ENCODE measurements at regions of chr20 and their contacts with region 1.

Region 1: GRCh38 chr20:53915446-53916172 is 154.8 kb downstream of the BCAS1 start:
- DNase-seq: peak; percentile 98
- H3K4me3 Mint-ChIP-seq: peak overlapping the region; percentile 88
- H3K27ac Mint-ChIP-seq: peak overlapping the region; percentile 90
- H3K4me1 Mint-ChIP-seq: peaks cover 40% of the 10 kb centered on the region
- H3K27me3 Mint-ChIP-seq: no peaks in the 10 kb centered on the region

Region 2: DNA sequence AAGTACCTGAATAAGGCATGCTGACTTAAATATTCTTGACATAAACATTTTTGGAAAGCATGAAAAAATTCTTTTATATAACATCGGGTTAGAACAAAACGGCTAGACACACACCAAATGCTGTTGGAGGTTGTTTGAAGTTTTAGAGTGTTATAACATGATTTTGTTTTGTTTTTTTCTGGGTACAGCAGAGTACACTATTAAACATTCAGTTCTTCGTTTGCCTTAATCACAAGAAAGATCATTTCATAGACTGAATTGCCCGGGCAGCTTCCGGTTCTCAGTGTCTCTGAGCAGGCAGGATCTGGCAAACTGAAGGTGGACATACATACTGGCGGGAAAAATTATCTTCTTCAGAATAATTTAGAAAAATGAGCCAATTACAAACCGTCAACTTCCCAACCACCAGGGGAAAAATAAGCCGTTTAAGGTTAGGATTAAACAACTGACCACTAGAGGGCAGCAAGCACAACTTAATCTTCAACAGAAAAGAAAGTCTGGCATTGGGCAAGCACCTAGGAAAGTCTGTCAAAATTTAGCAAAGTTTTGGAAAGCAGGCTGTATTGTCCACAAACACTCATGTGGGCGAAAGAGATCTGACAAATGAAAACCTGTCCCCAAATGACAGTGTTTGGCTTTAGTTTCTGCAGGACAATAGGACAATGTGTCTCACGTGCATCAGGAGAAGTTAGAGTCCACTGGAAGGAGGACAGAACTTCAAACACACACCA is 337.0 kb before region 1 on chr20:
- CTCF ChIA-PET with region 1: interaction called, 20 read pairs
- POLR2A ChIA-PET with region 1: no interaction called
- DNase-seq: peak; percentile 83
- H3K4me3 Mint-ChIP-seq: peak overlapping the region; percentile 72
- H3K27ac Mint-ChIP-seq: peak overlapping the region; percentile 70
- H3K4me1 Mint-ChIP-seq: peaks cover 93% of the 10 kb centered on the region
- H3K27me3 Mint-ChIP-seq: no peaks in the 10 kb centered on the region

Region 3: DNA sequence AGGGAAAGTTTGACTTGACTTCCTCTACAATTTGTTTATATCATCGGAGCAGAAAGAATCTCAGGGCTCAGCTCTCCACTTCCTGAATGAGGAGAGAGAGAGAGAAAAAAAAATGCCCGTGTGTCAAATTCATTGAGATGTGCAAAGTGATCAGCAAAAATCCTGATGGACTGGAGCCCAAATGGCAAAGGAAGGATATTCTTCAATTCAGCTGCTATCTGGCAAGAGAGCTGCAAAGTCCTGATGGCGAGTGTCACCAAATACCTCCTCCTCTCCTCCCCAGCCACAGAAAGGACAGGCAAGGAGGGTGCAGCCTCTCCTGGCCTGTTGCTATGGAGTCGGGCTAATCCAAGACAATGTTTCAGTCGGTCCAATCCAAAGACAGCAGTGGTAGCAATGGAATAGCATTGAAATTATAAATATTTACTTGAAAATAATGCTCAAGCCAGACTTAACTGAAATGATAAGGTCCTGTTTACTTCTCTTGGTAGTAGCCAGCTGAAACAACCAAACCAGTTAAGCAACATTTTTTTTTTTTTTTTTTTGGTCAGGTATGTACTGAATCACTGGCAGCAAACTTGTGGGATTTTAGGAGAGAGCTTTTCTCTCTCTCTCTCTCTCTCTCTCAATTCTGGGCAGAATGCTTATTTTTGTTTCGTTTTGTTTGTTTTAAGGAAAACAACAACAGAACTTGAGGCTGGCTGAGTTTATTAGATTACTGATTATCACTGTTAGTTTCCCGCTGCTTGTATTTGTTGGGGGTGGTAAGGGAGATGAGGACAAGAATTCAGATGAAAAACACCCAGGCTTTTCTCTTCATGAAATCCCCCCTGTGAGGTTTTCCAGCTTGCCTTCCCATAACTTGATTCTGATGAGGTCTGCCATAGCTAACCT is 49.5 kb before region 1 on chr20:
- CTCF ChIA-PET with region 1: interaction called, 10 read pairs
- POLR2A ChIA-PET with region 1: no interaction called
- DNase-seq: no peak
- H3K4me3 Mint-ChIP-seq: peak overlapping the region; percentile 45
- H3K27ac Mint-ChIP-seq: peak overlapping the region; percentile 88
- H3K4me1 Mint-ChIP-seq: peaks cover 66% of the 10 kb centered on the region
- H3K27me3 Mint-ChIP-seq: no peaks in the 10 kb centered on the region

Region 4: DNA sequence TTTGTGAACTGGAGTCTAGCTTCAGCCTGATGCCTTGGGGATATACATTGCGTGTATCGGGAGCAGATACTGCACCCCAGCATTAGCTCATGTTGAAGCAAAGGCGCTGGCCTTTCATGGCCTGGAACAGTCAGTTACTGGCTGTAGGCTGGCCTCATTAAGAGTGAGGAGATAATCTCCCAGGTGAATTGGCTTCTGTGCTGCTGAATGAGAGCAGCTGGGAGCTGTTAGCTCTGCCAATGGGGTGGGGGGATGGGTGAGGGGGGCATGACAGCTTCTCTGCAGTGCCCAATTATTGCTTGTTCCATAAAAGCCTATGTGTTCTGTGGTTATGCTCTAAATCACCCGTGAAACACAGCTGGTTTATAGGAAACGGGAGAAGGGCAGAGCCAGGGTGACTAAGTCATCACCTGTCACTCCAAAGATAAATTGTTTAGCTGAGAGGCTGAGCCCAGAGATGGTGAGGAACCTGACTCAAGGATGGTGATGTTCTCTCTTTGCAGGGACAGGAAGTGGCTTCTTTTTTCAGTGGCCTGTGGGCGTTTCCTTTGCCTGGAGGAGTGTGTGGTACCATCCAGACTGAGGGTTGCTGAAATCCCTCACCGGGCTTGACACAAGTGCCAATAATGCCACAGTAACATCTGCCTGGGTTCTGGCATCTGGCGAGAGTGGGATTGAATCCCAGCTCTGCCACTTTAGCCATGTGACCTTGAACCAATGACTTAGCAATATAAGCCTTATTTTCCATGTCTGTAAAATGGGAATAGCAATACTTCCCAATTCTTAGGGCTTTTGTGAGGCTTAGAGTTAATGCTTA is 16.1 kb before region 1 on chr20:
- CTCF ChIA-PET with region 1: interaction called, 36 read pairs
- POLR2A ChIA-PET with region 1: interaction called, 7 read pairs
- DNase-seq: peak; percentile 88
- H3K4me3 Mint-ChIP-seq: no peak overlapping the region
- H3K27ac Mint-ChIP-seq: peak overlapping the region; percentile 88
- H3K4me1 Mint-ChIP-seq: peaks cover 71% of the 10 kb centered on the region
- H3K27me3 Mint-ChIP-seq: no peaks in the 10 kb centered on the region

Region 5: DNA sequence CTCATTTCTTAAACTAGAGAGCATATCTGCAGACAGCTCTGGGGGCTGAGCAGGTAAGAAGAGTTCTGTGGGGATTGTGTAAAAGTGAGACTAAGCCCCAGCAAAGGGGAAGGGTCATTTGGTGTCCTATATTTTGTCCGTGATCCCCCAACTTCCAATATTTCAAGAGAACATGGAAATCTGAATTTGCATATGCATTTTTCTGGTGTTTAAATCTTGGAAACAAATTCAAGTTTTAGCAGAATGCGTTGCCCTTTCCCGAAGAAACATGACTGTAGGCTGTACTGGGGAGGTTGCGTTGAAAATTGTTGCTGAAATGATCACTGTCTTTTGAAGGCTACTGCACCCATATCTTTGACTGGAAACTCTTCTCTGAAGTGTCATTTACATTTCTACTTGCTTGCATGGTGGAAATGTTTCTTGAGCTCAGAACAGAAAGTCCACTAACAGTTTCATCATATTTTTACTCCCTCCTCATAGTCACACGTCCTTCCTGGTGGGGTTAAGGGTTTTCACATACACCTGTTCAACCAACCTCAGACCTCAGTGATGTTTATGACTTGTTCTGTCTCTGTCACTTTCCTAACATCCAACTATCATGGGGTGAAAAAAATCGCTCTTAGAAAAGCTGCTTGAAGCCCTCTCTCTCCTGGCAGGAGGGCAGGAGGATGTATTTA is 14.5 kb after region 1 on chr20:
- CTCF ChIA-PET with region 1: interaction called, 21 read pairs
- POLR2A ChIA-PET with region 1: interaction called, 5 read pairs
- DNase-seq: no peak
- H3K4me3 Mint-ChIP-seq: no peak overlapping the region
- H3K27ac Mint-ChIP-seq: no peak overlapping the region
- H3K4me1 Mint-ChIP-seq: peaks cover 51% of the 10 kb centered on the region
- H3K27me3 Mint-ChIP-seq: no peaks in the 10 kb centered on the region